ENCODE measurements at regions of chr16 and their contacts with region 1.

Region 1: DNA sequence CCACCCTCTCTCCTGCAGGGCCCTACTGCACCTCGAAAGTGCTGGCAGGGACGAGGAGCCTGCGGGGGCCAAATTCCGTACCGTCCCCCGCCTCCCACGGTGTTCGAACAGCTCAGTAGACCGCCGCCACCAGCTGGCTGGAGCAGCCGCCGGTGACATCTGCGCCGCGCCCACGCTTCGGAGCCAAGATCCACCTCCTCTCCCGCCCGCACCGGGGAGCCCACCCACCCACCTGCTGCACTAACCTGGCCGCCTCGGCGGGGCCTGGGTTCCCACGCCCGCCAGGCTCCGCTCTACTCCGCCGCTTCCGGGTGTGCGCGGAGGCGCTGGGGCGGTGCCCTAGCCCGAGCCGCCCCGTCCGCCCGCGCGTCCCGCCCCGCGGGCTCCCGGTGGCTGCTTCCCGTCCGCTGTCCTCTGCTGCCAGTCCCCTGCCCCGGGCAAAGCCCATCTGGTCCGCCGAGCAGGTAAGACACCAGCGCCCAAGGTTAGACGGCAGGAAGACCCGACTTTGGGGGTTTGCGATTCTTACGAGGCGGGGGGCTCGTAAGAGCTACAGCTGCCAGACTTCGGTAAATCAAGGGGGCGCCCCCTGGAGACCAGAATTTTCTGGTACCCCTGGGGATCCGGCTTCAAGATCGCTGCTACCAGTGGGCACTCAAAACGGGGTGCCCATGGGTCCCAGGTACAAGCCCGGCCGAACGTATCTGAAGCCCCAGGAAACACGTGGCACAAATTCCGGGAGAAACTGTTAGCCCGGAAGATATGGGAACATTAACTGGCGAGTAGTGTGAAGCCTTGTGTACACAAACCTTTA is at the starts of genes FBXL8 and TRADD:
- H3K4me3 ChIP-seq: peak within 1 kb of the TSS; percentile 75
- H3K27ac ChIP-seq: no peak within 1 kb of the TSS; the same call in 1 of the 2 replicates
- H3K4me1 ChIP-seq: no peaks in the 10 kb centered on the region
- CTCF ChIP-seq: peak; percentile 75

Region 2: GRCh38 chr16:66977341-66978113 is 182.3 kb before region 1 on chr16:
- CTCF ChIA-PET with region 1: interaction called, 15 read pairs
- POLR2A ChIA-PET with region 1: no interaction called
- H3K4me3 ChIP-seq: no peak overlapping the region
- H3K27ac ChIP-seq: no peak overlapping the region
- H3K4me1 ChIP-seq: no peaks in the 10 kb centered on the region
- CTCF ChIP-seq: peak; percentile 98

Region 3: DNA sequence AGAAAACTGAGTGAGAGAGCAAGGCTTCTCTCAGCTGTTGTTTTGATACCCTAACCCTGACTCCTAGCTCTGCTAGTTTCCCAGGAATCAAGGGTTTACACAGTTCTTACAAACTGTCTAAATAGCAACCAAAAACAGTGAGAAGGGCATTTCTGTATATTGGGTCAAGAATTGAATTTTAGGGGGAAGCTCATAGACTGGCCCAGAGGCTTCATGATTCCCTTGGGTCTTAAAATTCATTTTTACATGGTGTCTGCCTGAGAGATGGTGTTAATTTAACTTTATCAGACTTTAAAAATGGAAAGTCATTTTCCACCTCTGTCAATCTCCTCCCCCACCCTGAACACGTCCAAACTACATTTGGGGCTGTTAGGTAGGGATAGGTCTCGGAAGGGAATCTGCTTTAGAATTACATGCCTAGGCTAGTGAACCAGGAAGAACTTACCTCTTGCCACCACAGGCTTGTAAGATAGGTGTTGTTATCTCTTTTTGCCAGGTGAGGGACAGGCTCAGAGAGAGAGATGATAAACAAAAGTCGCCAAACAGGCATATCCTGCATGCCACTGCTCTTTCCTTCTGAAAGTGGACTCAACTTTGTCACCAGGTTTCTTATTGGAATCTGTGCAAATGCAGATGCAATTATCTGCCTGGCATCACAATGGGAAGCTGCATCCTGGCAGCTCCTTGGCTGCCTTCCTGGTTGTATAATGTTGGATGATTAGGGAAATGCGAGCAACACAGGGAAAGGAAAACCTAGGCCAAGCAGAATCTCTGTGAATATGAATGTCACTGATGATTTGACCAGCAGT is 47.0 kb before region 1 on chr16:
- CTCF ChIA-PET with region 1: interaction called, 10 read pairs
- POLR2A ChIA-PET with region 1: interaction called, 3 read pairs
- H3K4me3 ChIP-seq: no peak overlapping the region
- H3K27ac ChIP-seq: no peak overlapping the region
- H3K4me1 ChIP-seq: peaks cover 3% of the 10 kb centered on the region; the same call in 1 of the 2 replicates
- CTCF ChIP-seq: no peak

Region 4: DNA sequence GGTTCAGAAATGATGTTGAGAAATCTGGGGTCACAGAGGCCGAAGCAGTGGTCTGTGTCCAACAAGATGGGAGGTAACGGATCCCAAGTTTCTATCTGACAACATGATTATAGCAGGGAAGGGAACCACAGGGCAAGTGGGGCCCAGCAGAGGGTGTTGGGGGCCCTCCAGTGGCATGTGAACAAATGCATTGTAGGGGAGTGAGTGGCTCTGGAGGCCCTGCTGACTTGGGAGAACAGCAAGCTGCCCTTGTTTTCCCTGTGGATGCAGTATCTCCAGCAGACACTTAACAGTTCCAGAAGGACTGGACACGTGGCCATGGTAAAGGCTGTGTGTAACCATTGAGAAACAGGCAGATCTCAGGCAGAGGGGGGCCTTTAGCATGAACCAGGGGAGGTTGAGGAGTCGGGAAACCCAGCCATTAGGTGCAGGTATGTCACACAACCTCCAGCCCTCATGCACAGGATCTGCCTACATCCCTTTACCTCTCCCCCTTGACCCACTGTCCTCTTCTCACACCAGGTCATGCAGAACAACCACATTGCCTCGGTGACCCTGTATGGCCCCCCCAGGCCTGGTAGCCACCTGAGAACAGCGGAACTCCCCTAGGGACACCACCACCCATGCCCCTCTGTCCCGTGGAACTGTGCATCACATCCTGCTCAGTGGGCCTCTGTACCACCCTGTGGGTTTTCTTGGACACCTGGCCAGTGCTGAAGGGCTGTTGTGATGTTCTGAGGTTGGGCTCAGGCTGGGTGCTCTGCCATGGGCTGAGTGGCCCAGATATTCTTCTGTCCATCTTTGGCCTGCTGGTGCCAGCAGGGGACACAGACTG is 13.1 kb before region 1 on chr16:
- CTCF ChIA-PET with region 1: interaction called, 20 read pairs
- POLR2A ChIA-PET with region 1: no interaction called
- H3K4me3 ChIP-seq: no peak overlapping the region
- H3K27ac ChIP-seq: no peak overlapping the region
- H3K4me1 ChIP-seq: 0 out of 2 replicates have a peak, but pooled peaks cover 3% of the 10 kb centered on the region
- CTCF ChIP-seq: 0 out of 2 replicates have a peak, but pooled peaks have one; percentile 37

Region 5: GRCh38 chr16:67183627-67184328 is 24.0 kb after region 1 on chr16 and contains the start of gene MATCAP1:
- CTCF ChIA-PET with region 1: interaction called, 13 read pairs
- POLR2A ChIA-PET with region 1: interaction called, 3 read pairs
- H3K4me3 ChIP-seq: peak within 1 kb of the TSS; percentile 84
- H3K27ac ChIP-seq: peak within 1 kb of the TSS; percentile 88
- H3K4me1 ChIP-seq: peaks cover 9% of the 10 kb centered on the region
- CTCF ChIP-seq: 0 out of 2 replicates have a peak, but pooled peaks have one; percentile 38